Mammary epithelial cell (primary cell): ENCODE measurements at regions of chr9 and their contacts with region 1.

Region 1: GRCh38 chr9:127734747-127735529 is at the start of gene TOR2A:
- DNase-seq: peak; percentile 95
- H3K4me3 ChIP-seq: peak within 1 kb of the TSS; percentile 59 to 62 (median 61)
- H3K27ac ChIP-seq: peak within 1 kb of the TSS; percentile 51
- H3K4me1 ChIP-seq: peaks cover 20% of the 10 kb centered on the region
- H3K27me3 ChIP-seq: no peaks in the 10 kb centered on the region
- CTCF ChIP-seq: peak; percentile 84 to 94
- total RNA-seq, gene TOR2A: 4.0 to 13.2 TPM

Region 2: GRCh38 chr9:127360829-127361228 is 374.1 kb before region 1 on chr9:
- CTCF ChIA-PET with region 1: no interaction called
- dilution Hi-C with region 1: no loop called
- in situ Hi-C with region 1: no loop called
- intact Hi-C with region 1: loop called (anchors 5 kb)
- DNase-seq: peak; percentile 27
- H3K4me3 ChIP-seq: no peak overlapping the region
- H3K27ac ChIP-seq: peak overlapping the region; percentile 66
- H3K4me1 ChIP-seq: peaks cover 23% of the 10 kb centered on the region
- H3K27me3 ChIP-seq: no peaks in the 10 kb centered on the region
- CTCF ChIP-seq: peak; percentile 54 to 65

Region 3: GRCh38 chr9:127503947-127504782 is 230.8 kb before region 1 on chr9:
- CTCF ChIA-PET with region 1: interaction called, 3 read pairs
- dilution Hi-C with region 1: no loop called
- in situ Hi-C with region 1: no loop called
- intact Hi-C with region 1: loop called (anchors 2 kb)
- DNase-seq: peak; percentile 59
- H3K4me3 ChIP-seq: no peak overlapping the region
- H3K27ac ChIP-seq: no peak overlapping the region
- H3K4me1 ChIP-seq: peaks cover 9% of the 10 kb centered on the region
- H3K27me3 ChIP-seq: no peaks in the 10 kb centered on the region
- CTCF ChIP-seq: peak; percentile 77 to 86

Region 4: DNA sequence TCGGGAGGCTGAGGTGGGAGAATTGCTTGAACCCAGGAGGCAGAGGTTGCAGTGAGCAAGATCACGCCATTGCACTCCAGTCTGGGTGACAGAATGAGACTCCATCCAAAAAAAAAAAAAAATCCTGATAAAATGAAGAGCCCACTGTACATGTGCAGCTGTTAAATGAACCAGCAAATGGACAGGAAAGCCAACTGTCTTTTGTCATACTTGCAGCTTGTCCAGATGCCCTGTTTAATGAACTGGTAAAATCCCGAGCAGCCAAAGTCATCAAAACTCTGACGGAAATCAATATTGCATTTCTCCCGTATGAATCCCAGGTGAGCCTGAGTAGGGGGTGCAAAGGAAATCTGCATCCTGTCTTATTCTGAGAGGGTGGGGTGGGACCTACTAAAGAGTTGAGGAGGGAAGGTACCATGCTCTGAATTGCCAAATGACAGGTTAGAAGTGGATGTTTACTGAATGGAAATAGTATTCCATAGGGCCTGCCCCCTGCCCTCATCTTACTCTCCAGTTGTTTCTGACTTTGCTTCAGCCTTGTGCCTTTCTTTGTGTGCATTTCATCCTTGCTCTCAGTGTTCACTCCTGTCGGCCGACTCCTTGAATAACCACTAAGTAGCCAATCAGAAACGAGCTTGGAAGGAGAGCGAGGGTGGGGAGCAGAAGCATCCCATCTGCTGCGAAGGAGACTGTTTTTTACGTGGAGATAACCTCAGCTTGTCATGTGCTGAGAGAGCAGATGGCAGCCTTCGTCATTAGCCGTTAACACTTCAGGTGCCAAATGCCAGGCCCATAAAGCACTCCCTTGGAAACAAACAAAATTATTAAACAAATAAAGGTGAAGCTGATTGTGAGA is 73.8 kb before region 1 on chr9:
- CTCF ChIA-PET with region 1: no interaction called
- dilution Hi-C with region 1: no loop called
- in situ Hi-C with region 1: no loop called
- intact Hi-C with region 1: no loop called
- DNase-seq: no peak
- H3K4me3 ChIP-seq: no peak overlapping the region
- H3K27ac ChIP-seq: no peak overlapping the region
- H3K4me1 ChIP-seq: no peaks in the 10 kb centered on the region
- H3K27me3 ChIP-seq: no peaks in the 10 kb centered on the region
- CTCF ChIP-seq: no peak

Region 5: DNA sequence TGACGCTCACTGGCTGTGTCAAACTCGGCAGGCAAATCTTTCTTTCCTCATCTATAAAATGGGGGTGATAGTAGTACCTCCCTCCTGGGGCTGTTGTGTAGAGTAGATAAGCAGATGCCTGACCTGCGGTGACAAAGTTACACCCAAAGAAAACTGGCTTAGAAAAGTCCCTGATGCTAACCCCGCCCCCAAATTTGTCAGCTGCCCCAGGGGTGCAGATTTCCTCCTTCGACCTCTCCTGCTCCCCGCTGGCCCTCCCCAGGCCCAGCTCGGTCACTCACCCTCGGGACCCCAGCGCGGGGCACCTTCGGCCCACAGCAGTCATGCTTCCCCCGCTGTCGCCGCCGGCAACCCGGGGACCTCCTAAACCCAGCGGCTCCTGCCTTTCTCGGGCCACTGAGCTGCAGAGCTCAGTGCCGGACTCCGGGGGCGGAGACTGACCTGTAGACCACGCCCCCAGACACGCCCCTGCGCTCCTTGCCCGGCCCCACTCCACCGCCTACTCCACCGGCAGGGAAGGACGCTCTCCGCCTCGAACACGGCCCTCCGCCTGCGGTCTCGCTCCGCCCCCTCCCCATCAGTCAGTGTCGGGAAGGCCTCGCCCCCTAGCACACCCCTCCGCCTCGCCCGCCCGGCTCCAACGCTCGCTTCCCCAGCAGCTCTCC is 36.1 kb after region 1 on chr9:
- CTCF ChIA-PET with region 1: interaction called, 20 read pairs
- dilution Hi-C with region 1: no loop called
- in situ Hi-C with region 1: no loop called
- intact Hi-C with region 1: loop called (anchors 2 kb)
- DNase-seq: peak; percentile 97
- H3K4me3 ChIP-seq: peak overlapping the region; percentile 31 to 62 (median 48)
- H3K27ac ChIP-seq: no peak overlapping the region
- H3K4me1 ChIP-seq: peaks cover 8% of the 10 kb centered on the region
- H3K27me3 ChIP-seq: no peaks in the 10 kb centered on the region
- CTCF ChIP-seq: no peak

Region 6: DNA sequence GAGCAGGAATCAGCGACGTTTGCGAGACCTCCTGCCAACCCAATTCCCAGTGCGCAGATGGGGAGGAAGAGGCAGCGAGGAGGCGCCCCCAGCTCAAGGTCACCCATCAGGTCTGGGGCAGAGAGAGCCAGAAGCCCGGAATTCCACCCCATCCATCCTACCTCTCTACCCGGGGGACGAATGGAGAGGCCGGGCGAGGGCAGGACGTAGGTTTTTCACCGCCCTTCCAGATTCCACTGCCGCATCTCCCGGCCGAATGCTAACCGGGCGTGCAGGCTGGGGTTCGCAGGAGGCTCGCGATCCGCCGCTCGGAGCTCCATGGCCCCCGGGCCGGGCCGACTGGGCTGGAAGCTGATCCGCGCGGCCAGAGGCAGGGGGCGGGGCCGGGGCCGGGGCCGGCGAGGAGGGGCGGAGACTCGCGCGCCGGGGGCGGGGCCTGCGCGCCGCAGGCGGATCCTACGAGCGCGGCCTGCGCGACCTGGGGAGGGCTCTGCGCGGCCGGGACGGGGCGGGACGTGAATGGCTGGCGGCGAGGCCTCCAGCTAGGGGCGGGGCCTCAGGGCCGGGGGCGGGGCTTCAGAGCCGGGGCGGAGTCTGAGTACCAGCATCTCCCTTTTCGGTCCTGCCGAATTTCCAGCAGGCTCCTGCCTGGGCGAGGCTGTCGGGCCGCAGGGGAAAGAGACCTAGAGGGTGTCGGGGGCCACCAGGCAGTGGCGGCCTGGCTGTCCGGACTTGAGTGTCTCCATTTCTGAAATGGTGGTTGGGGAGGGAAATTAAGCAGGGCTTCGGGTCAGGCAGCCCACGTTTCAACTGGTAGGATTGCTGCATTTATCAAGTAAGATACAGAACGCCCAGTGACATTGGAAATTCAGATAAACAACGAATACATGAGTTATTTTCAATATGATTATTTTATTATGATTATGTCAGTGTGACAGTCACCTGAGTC is 182.0 kb after region 1 on chr9 and contains the start of gene ST6GALNAC4:
- CTCF ChIA-PET with region 1: interaction called, 3 read pairs
- dilution Hi-C with region 1: no loop called
- in situ Hi-C with region 1: loop called in 1 of 2 experiments (anchors 5 kb)
- intact Hi-C with region 1: loop called (anchors 1 kb)
- DNase-seq: peak; percentile 76
- H3K4me3 ChIP-seq: peak within 1 kb of the TSS; percentile 35 to 62 (median 58)
- H3K27ac ChIP-seq: peak within 1 kb of the TSS; percentile 16
- H3K4me1 ChIP-seq: peaks cover 38% of the 10 kb centered on the region
- H3K27me3 ChIP-seq: no peaks in the 10 kb centered on the region
- CTCF ChIP-seq: no peak
- total RNA-seq, gene ST6GALNAC4: 14.3 to 19.6 TPM

Region 7: GRCh38 chr9:127943731-127944144 is 208.8 kb after region 1 on chr9:
- CTCF ChIA-PET with region 1: interaction called, 10 read pairs
- dilution Hi-C with region 1: no loop called
- in situ Hi-C with region 1: no loop called
- intact Hi-C with region 1: no loop called
- DNase-seq: peak; percentile 50
- H3K4me3 ChIP-seq: no peak overlapping the region
- H3K27ac ChIP-seq: no peak overlapping the region
- H3K4me1 ChIP-seq: peaks cover 3% of the 10 kb centered on the region
- H3K27me3 ChIP-seq: no peaks in the 10 kb centered on the region
- CTCF ChIP-seq: peak; percentile 81 to 94